ENCODE measurements at regions of chr12 and their contacts with region 1.

Region 1: GRCh38 chr12:12786716-12787601 is 1.5 kb downstream of the APOLD1 start:
- DNase-seq: peak; percentile 51 to 73
- ATAC-seq: peak; percentile 72 to 74
- H3K4me3 ChIP-seq: peak overlapping the region; percentile 70 to 87 (median 80)
- H3K27ac ChIP-seq: peak overlapping the region; percentile 87 to 94 (median 92)
- H3K4me1 ChIP-seq: peaks cover 12 to 30% of the 10 kb centered on the region in 2 donors
- H3K27me3 ChIP-seq: no peaks in the 10 kb centered on the region
- CTCF ChIP-seq: peak; percentile 20 to 42 (median 32)
- POLR2A ChIP-seq: peak; percentile 59 to 71

Region 2: DNA sequence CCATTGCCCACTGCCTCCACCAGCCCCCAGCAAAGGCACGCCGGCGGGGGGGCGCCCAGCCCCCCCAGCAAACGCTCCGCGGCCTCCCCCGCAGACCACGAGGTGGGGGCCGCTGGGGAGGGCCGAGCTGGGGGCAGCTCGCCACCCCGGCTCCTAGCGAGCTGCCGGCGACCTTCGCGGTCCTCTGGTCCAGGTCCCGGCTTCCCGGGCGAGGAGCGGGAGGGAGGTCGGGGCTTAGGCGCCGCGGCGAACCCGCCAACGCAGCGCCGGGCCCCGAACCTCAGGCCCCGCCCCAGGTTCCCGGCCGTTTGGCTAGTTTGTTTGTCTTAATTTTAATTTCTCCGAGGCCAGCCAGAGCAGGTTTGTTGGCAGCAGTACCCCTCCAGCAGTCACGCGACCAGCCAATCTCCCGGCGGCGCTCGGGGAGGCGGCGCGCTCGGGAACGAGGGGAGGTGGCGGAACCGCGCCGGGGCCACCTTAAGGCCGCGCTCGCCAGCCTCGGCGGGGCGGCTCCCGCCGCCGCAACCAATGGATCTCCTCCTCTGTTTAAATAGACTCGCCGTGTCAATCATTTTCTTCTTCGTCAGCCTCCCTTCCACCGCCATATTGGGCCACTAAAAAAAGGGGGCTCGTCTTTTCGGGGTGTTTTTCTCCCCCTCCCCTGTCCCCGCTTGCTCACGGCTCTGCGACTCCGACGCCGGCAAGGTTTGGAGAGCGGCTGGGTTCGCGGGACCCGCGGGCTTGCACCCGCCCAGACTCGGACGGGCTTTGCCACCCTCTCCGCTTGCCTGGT is 70.0 kb before region 1 on chr12 and contains the start of gene CDKN1B:
- in situ Hi-C with region 1: no loop called
- intact Hi-C with region 1: loop called (anchors 5 kb)
- DNase-seq: peak; percentile 86 to 91
- ATAC-seq: peak; percentile 84 to 86
- H3K4me3 ChIP-seq: peak within 1 kb of the TSS; percentile 72 to 99 (median 92)
- H3K27ac ChIP-seq: peak within 1 kb of the TSS; percentile 96 to 99 (median 98)
- H3K4me1 ChIP-seq: peaks cover 50 to 60% of the 10 kb centered on the region in 2 donors
- H3K27me3 ChIP-seq: no peaks in the 10 kb centered on the region
- CTCF ChIP-seq: peak in 1 of 5 experiments; percentile 5
- POLR2A ChIP-seq: peak; percentile 81 to 92
- total RNA-seq, gene CDKN1B: 43.6 to 76.4 (median 56.6) TPM

Region 3: GRCh38 chr12:12813120-12814101 is 26.5 kb after region 1 on chr12 and contains the start of gene DDX47:
- in situ Hi-C with region 1: no loop called
- intact Hi-C with region 1: loop called (anchors 1 kb)
- DNase-seq: peak; percentile 91 to 93
- ATAC-seq: peak; percentile 92 to 96
- H3K4me3 ChIP-seq: peak within 1 kb of the TSS; percentile 82 to 99 (median 93)
- H3K27ac ChIP-seq: peak within 1 kb of the TSS; percentile 78 to 88 (median 82)
- H3K4me1 ChIP-seq: peaks cover 24 to 38% of the 10 kb centered on the region in 2 donors
- H3K27me3 ChIP-seq: no peaks in the 10 kb centered on the region
- CTCF ChIP-seq: peak; percentile 95 to 99 (median 97)
- POLR2A ChIP-seq: peak in 1 of 2 donors; percentile 15
- total RNA-seq, gene DDX47: 37.1 to 75.4 (median 58.3) TPM

Region 4: GRCh38 chr12:12983420-12984035 is 196.6 kb after region 1 on chr12:
- in situ Hi-C with region 1: loop called in 1 of 4 experiments (anchors 25 kb)
- intact Hi-C with region 1: loop called (anchors 10 kb)
- DNase-seq: no peak
- ATAC-seq: peak; percentile 55 to 68
- H3K4me3 ChIP-seq: no peak overlapping the region
- H3K27ac ChIP-seq: no peak overlapping the region
- H3K4me1 ChIP-seq: no peaks in the 10 kb centered on the region
- H3K27me3 ChIP-seq: no peaks in the 10 kb centered on the region
- CTCF ChIP-seq: peak in 4 of 5 experiments; percentile 6 to 56 (median 42)
- POLR2A ChIP-seq: no peak

Measured in gastrocnemius medialis (tissue), 4 donors.